CD4-positive, alpha-beta memory T cell (primary cell): ENCODE measurements at regions of chr9 and their contacts with region 1.

Region 1: GRCh38 chr9:126471084-126471624 is 142.6 kb upstream of the LMX1B start:
- DNase-seq: peak; percentile 82 to 88 (median 85)
- H3K4me3 ChIP-seq: peak overlapping the region in 1 of 2 donors; percentile 27
- H3K4me3 Mint-ChIP-seq: peak overlapping the region; percentile 73 to 87 (median 80)
- H3K27ac ChIP-seq: peak overlapping the region; percentile 57
- H3K27ac Mint-ChIP-seq: peak overlapping the region; percentile 92 to 98 (median 96)
- H3K4me1 ChIP-seq: peaks cover 70% of the 10 kb centered on the region
- H3K4me1 Mint-ChIP-seq: peaks cover 62 to 90% (median 76%) of the 10 kb centered on the region in 4 donors
- H3K27me3 ChIP-seq: no peaks in the 10 kb centered on the region
- H3K27me3 Mint-ChIP-seq: no peaks in the 10 kb centered on the region

Region 2: GRCh38 chr9:126326228-126327005 is 144.7 kb before region 1 on chr9 and contains the start of gene MVB12B:
- CTCF ChIA-PET with region 1: no interaction called
- POLR2A ChIA-PET with region 1: interaction called, 27 read pairs
- intact Hi-C with region 1: no loop called
- DNase-seq: peak; percentile 59 to 66 (median 61)
- H3K4me3 ChIP-seq: peak within 1 kb of the TSS in 1 of 2 donors; percentile 55
- H3K4me3 Mint-ChIP-seq: peak within 1 kb of the TSS; percentile 84 to 93 (median 86)
- H3K27ac ChIP-seq: peak within 1 kb of the TSS; percentile 50
- H3K27ac Mint-ChIP-seq: peak within 1 kb of the TSS; percentile 80 to 94 (median 88)
- H3K4me1 ChIP-seq: peaks cover 35% of the 10 kb centered on the region
- H3K4me1 Mint-ChIP-seq: peaks cover 27 to 42% (median 35%) of the 10 kb centered on the region in 4 donors
- H3K27me3 ChIP-seq: no peaks in the 10 kb centered on the region
- H3K27me3 Mint-ChIP-seq: no peaks in the 10 kb centered on the region
- total RNA-seq, gene MVB12B: 6.0 to 6.5 TPM

Region 3: DNA sequence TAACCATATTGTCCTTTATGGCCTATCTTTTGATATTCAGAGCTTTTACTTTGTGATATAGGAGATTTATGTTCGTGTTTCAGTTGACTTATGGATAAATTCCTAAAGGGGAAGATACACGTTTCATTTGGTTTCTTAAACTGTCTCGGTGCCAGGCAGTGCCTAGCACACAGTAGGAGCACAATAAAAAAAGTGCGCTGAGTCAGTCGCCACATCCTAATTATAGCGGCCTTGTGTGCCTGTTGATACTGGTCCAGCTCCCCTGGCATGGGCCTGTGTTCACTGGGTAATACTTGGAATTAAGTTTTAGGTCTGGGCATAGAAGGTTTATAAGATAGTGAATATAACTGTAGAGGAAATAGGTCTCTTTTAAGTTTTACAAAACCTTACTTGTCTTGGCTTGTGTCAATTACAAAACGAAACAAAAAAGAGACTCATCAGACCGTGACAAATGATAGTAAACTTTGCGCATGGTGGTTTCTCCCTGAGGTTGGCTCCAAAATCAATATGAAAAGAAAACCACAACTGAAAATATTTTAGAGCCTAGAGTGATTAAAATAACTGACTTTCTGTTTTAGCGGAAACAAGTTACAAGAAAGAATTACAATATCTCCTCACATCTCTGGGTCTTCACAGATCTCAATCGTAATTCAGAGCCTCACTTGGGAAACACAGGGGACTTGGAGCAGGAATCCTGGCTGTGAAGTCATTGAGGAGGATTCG is 59.8 kb before region 1 on chr9:
- CTCF ChIA-PET with region 1: no interaction called
- POLR2A ChIA-PET with region 1: interaction called, 19 read pairs
- intact Hi-C with region 1: loop called (anchors 1 kb)
- DNase-seq: peak; percentile 63 to 82 (median 70)
- H3K4me3 ChIP-seq: peak overlapping the region; percentile 14 to 60
- H3K4me3 Mint-ChIP-seq: peak overlapping the region; percentile 53 to 91 (median 82)
- H3K27ac ChIP-seq: peak overlapping the region; percentile 28
- H3K27ac Mint-ChIP-seq: peak overlapping the region; percentile 81 to 98 (median 91)
- H3K4me1 ChIP-seq: peaks cover 31% of the 10 kb centered on the region
- H3K4me1 Mint-ChIP-seq: peaks cover 24 to 39% (median 28%) of the 10 kb centered on the region in 4 donors
- H3K27me3 ChIP-seq: no peaks in the 10 kb centered on the region
- H3K27me3 Mint-ChIP-seq: no peaks in the 10 kb centered on the region

Region 4: GRCh38 chr9:126423142-126423915 is 47.8 kb before region 1 on chr9:
- CTCF ChIA-PET with region 1: no interaction called
- POLR2A ChIA-PET with region 1: interaction called, 12 read pairs
- intact Hi-C with region 1: no loop called
- DNase-seq: peak in 2 of 5 donors; percentile 6 to 22
- H3K4me3 ChIP-seq: no peak overlapping the region
- H3K4me3 Mint-ChIP-seq: peak overlapping the region in 6 of 8 donors; percentile 10 to 57 (median 34)
- H3K27ac ChIP-seq: no peak overlapping the region
- H3K27ac Mint-ChIP-seq: peak overlapping the region in 6 of 7 donors; percentile 14 to 75 (median 58)
- H3K4me1 ChIP-seq: peaks cover 12% of the 10 kb centered on the region
- H3K4me1 Mint-ChIP-seq: peaks cover 8 to 28% (median 15%) of the 10 kb centered on the region in 4 donors
- H3K27me3 ChIP-seq: no peaks in the 10 kb centered on the region
- H3K27me3 Mint-ChIP-seq: no peaks in the 10 kb centered on the region

Region 5: DNA sequence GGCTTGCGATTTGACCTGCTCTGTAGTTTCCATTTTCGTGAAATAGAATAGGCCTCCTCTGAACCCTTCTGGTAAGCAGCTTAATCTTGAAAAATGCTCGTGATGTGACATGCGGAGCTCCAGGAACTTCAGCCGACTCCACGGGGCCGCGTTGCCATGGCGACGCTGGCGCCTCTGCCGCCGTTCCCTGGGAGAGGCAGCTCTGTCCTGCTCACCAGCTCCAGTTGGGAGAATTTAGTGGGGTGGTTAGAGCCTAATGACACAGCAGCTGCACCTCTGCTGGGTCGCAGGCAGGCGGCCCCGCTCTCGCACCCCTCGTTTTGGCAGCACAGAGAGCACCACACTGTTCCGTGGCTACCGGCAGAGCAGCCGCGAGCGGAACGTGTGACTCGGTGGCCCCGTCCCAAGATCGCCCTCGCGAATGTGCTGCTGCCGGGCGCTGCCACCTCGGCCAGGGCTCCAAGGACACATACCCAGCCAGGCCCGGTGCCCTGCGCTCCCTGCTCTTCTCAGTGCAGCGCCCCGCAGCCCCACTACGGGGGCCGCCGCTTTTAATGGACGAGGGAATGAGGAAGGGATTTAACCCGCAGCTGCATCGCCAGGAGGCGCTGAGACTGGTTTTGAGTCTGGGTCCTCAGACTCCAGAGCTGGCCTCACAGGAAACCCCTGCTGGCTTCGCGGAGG is 11.3 kb after region 1 on chr9:
- CTCF ChIA-PET with region 1: interaction called, 15 read pairs
- POLR2A ChIA-PET with region 1: interaction called, 4 read pairs
- intact Hi-C with region 1: no loop called
- DNase-seq: no peak
- H3K4me3 ChIP-seq: no peak overlapping the region
- H3K4me3 Mint-ChIP-seq: no peak overlapping the region
- H3K27ac ChIP-seq: no peak overlapping the region
- H3K27ac Mint-ChIP-seq: no peak overlapping the region
- H3K4me1 ChIP-seq: peaks cover 11% of the 10 kb centered on the region
- H3K4me1 Mint-ChIP-seq: peaks cover 5 to 22% (median 15%) of the 10 kb centered on the region in 4 donors
- H3K27me3 ChIP-seq: no peaks in the 10 kb centered on the region
- H3K27me3 Mint-ChIP-seq: no peaks in the 10 kb centered on the region